Lower leg skin (tissue), 4 donors: ENCODE measurements at regions of chr15 and their contacts with region 1.

Region 1: GRCh38 chr15:57570994-57571393 is 20.7 kb upstream of the MYZAP start:
- DNase-seq: no peak
- H3K4me3 ChIP-seq: no peak overlapping the region
- CTCF ChIP-seq: no peak
- POLR2A ChIP-seq: no peak

Region 2: GRCh38 chr15:55981582-55982249 is 1589.3 kb before region 1 on chr15:
- intact Hi-C with region 1: no loop called
- DNase-seq: no peak
- H3K4me3 ChIP-seq: no peak overlapping the region
- CTCF ChIP-seq: no peak
- POLR2A ChIP-seq: no peak

Region 3: DNA sequence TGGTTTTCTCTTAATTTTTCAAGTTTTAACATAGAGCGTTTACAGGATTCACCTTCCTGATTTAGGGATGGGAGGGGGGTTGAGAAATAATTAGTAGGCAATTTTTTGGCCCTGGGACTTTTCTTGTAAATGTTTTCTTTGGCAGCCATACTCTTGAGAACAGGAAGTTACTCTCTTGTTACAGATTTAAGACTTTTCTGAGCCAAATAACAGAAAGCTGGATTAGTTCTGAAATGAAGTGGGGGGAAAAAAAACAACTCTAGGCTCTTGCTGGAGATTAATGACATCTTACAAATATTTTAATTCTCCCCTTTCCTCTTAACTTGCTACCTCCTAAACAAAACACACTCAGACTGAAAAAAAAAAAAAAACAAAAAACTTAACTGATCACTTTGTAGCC is 121.7 kb after region 1 on chr15:
- intact Hi-C with region 1: no loop called
- DNase-seq: no peak
- H3K4me3 ChIP-seq: no peak overlapping the region
- CTCF ChIP-seq: no peak
- POLR2A ChIP-seq: no peak

Region 4: DNA sequence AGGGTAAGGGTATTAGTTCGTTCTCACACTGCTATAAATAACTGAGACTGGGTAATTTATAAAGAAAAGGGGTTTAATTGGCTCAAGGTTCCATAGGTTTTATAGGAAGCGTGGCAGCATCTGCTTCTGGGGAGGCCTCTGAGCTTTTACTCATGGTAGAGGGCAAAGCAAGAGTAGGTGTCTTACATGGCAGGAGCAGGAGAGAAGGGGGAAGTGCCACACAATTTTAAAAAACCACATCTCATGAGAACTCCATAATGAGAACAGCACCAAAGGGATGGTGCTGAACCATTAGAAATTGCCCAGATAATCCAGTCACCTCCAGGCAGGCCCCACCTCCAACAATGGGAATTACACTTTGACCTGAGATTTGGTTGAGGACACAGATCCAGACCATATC is 1428.7 kb after region 1 on chr15:
- intact Hi-C with region 1: loop called (anchors 5 kb)
- DNase-seq: no peak
- H3K4me3 ChIP-seq: no peak overlapping the region
- CTCF ChIP-seq: no peak
- POLR2A ChIP-seq: no peak